ENCODE measurements at regions of chr3 and their contacts with region 1.

Region 1: GRCh38 chr3:138186803-138187295 is 252 bp upstream of the ARMC8 start:
- DNase-seq: peak; percentile 88 to 90 (median 89)
- H3K4me3 ChIP-seq: peak overlapping the region; percentile 94 to 97
- H3K4me3 Mint-ChIP-seq: peak overlapping the region; percentile 94 to 99 (median 97)
- H3K27ac ChIP-seq: peak overlapping the region; percentile 87
- H3K27ac Mint-ChIP-seq: peak overlapping the region; percentile 90 to 98 (median 96)
- H3K4me1 ChIP-seq: peaks cover 42% of the 10 kb centered on the region
- H3K4me1 Mint-ChIP-seq: peaks cover 30 to 51% (median 40%) of the 10 kb centered on the region in 4 donors
- H3K27me3 ChIP-seq: no peaks in the 10 kb centered on the region
- H3K27me3 Mint-ChIP-seq: peaks cover 0 to 2% of the 10 kb centered on the region in 2 donors

Region 2: GRCh38 chr3:136250226-136250902 is 1936.5 kb before region 1 on chr3 and contains the start of gene PCCB:
- CTCF ChIA-PET with region 1: no interaction called
- POLR2A ChIA-PET with region 1: no interaction called
- intact Hi-C with region 1: no loop called
- DNase-seq: peak; percentile 93 to 96 (median 94)
- H3K4me3 ChIP-seq: peak within 1 kb of the TSS; percentile 43 to 77
- H3K4me3 Mint-ChIP-seq: peak within 1 kb of the TSS; percentile 85 to 93 (median 90)
- H3K27ac ChIP-seq: peak within 1 kb of the TSS; percentile 75
- H3K27ac Mint-ChIP-seq: peak within 1 kb of the TSS; percentile 75 to 94 (median 90)
- H3K4me1 ChIP-seq: peaks cover 17% of the 10 kb centered on the region
- H3K4me1 Mint-ChIP-seq: peaks cover 15 to 27% (median 20%) of the 10 kb centered on the region in 4 donors
- H3K27me3 ChIP-seq: no peaks in the 10 kb centered on the region
- H3K27me3 Mint-ChIP-seq: no peaks in the 10 kb centered on the region
- total RNA-seq, gene PCCB: 12.1 to 12.4 TPM

Region 3: GRCh38 chr3:138174421-138175122 is 12.3 kb before region 1 on chr3 and contains the start of gene DBR1:
- CTCF ChIA-PET with region 1: interaction called, 16 read pairs
- POLR2A ChIA-PET with region 1: interaction called, 63 read pairs
- intact Hi-C with region 1: loop called (anchors 1 kb)
- DNase-seq: peak; percentile 78 to 84 (median 82)
- H3K4me3 ChIP-seq: peak within 1 kb of the TSS; percentile 54 to 91
- H3K4me3 Mint-ChIP-seq: peak within 1 kb of the TSS; percentile 96 to 100 (median 97)
- H3K27ac ChIP-seq: peak within 1 kb of the TSS; percentile 70
- H3K27ac Mint-ChIP-seq: peak within 1 kb of the TSS; percentile 95 to 99 (median 98)
- H3K4me1 ChIP-seq: peaks cover 32% of the 10 kb centered on the region
- H3K4me1 Mint-ChIP-seq: peaks cover 21 to 47% (median 35%) of the 10 kb centered on the region in 4 donors
- H3K27me3 ChIP-seq: no peaks in the 10 kb centered on the region
- H3K27me3 Mint-ChIP-seq: no peaks in the 10 kb centered on the region
- total RNA-seq, gene DBR1: 34.2 to 36.2 TPM

Region 4: GRCh38 chr3:138329127-138329983 is 142.5 kb after region 1 on chr3 and contains the start of gene NME9:
- CTCF ChIA-PET with region 1: interaction called, 11 read pairs
- POLR2A ChIA-PET with region 1: no interaction called
- intact Hi-C with region 1: loop called (anchors 1 kb)
- DNase-seq: peak; percentile 85 to 90 (median 89)
- H3K4me3 ChIP-seq: peak within 1 kb of the TSS; percentile 49 to 68
- H3K4me3 Mint-ChIP-seq: peak within 1 kb of the TSS; percentile 95 to 99 (median 98)
- H3K27ac ChIP-seq: peak within 1 kb of the TSS; percentile 72
- H3K27ac Mint-ChIP-seq: peak within 1 kb of the TSS; percentile 81 to 99 (median 98)
- H3K4me1 ChIP-seq: peaks cover 10% of the 10 kb centered on the region
- H3K4me1 Mint-ChIP-seq: peaks cover 17 to 41% (median 25%) of the 10 kb centered on the region in 4 donors
- H3K27me3 ChIP-seq: no peaks in the 10 kb centered on the region
- H3K27me3 Mint-ChIP-seq: no peaks in the 10 kb centered on the region
- total RNA-seq, gene NME9: 1.0 to 1.4 TPM

Region 5: DNA sequence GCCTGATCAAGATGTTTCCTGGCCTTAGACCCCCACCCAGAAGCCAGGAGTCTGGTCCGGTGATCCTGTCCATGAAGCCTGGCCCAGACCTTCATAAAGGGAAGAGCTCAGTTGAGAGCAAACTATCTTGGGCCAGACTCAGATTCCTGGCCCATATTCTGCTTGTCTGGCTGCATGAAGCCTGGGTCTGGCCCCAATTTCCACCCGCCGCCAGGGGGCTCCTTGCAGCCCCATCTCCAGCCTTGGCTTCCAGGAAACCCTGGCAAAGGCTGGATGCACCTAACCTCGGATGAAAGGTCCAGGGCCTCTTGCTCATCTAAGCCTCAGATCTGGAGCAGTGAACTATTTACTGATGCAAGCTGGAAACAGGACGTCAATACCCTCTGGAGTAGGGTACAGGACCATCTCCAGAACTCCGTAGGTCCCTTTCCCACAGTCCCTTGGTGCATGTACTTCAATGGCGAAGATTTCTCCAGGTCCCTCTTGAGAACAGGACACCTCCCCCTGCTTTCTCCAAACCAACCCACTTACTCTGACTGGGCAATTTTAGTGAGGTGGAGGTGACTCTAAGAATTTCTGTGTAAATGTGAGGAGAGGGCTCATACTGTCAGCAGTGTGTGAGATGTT is 754.5 kb after region 1 on chr3:
- CTCF ChIA-PET with region 1: interaction called, 4 read pairs
- POLR2A ChIA-PET with region 1: no interaction called
- intact Hi-C with region 1: loop called (anchors 10 kb)
- DNase-seq: no peak
- H3K4me3 ChIP-seq: no peak overlapping the region
- H3K4me3 Mint-ChIP-seq: no peak overlapping the region
- H3K27ac ChIP-seq: no peak overlapping the region
- H3K27ac Mint-ChIP-seq: peak overlapping the region in 1 of 7 donors; percentile 28
- H3K4me1 ChIP-seq: peaks cover 56% of the 10 kb centered on the region
- H3K4me1 Mint-ChIP-seq: peaks cover 23 to 59% (median 40%) of the 10 kb centered on the region in 4 donors
- H3K27me3 ChIP-seq: peaks cover 82% of the 10 kb centered on the region
- H3K27me3 Mint-ChIP-seq: peaks cover 72 to 73% of the 10 kb centered on the region in 2 donors

Region 6: GRCh38 chr3:139677388-139678155 is 1490.7 kb after region 1 on chr3 and contains the start of gene NMNAT3:
- CTCF ChIA-PET with region 1: no interaction called
- POLR2A ChIA-PET with region 1: no interaction called
- intact Hi-C with region 1: loop called (anchors 10 kb)
- DNase-seq: peak; percentile 67 to 73 (median 72)
- H3K4me3 ChIP-seq: peak within 1 kb of the TSS in 1 of 2 donors; percentile 73
- H3K4me3 Mint-ChIP-seq: peak within 1 kb of the TSS; percentile 72 to 84 (median 82)
- H3K27ac ChIP-seq: peak within 1 kb of the TSS; percentile 36
- H3K27ac Mint-ChIP-seq: peak within 1 kb of the TSS in 5 of 7 donors; percentile 21 to 44 (median 31)
- H3K4me1 ChIP-seq: peaks cover 5% of the 10 kb centered on the region
- H3K4me1 Mint-ChIP-seq: peaks cover 4 to 9% (median 7%) of the 10 kb centered on the region in 4 donors
- H3K27me3 ChIP-seq: no peaks in the 10 kb centered on the region
- H3K27me3 Mint-ChIP-seq: peaks cover 0 to 3% of the 10 kb centered on the region in 2 donors
- total RNA-seq, gene NMNAT3: 2.6 to 4.0 TPM

Measured in CD4-positive, alpha-beta memory T cell (primary cell).